Psoas muscle (tissue), 8 donors: ENCODE measurements at regions of chr17 and their contacts with region 1.

Region 1: GRCh38 chr17:5706577-5707216 is 122.4 kb upstream of the NLRP1 start:
- DNase-seq: peak; percentile 59 to 71
- ATAC-seq: peak; percentile 67 to 86 (median 83)
- H3K4me3 ChIP-seq: no peak overlapping the region
- H3K27ac ChIP-seq: no peak overlapping the region
- H3K4me1 ChIP-seq: no peaks in the 10 kb centered on the region
- H3K27me3 ChIP-seq: peaks cover 0 to 12% (median 2%) of the 10 kb centered on the region in 3 donors
- CTCF ChIP-seq: peak; percentile 71

Region 2: DNA sequence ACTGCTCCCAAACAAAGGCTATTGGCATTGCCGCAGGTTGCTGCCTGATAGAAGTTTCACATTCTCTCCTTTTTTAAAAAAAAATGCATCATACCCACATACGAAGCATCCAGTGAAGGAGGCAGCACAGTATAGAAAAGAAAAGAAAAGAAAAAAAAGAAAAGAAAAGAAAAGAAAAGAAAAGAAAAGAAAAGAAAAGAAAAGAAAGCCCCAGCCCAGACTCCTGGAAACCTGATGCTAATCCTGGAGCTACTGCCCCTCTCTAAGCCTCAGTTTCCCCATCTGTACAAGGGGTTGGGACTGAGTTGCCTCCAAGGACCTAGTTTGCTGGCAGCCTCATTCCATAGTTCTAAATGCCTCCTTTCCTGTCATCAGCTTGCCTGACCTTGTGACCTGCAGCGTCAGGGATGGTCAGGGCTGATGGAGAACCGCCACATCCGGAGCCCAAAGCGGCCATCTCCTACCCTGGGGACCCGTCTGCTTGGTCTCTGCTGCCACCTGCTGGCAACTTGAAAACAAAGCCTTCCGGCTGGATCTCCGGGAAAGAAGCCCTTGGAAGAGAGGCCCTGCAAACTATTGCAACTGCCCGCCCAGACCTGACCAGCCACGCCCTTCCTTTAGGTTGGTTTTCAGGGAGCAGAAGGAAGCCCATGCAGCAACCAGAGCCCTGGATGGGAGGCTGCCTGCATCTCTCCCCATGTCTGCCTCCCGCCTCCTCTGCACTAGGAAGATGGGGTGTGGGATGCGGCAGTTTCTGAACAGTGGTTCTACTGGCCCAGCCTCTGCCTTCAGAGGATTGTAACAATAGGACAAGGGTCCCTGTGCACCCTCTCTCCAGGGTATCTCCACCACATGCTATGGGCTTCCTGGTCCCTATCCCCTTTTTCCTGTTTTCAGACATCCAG is 715.3 kb after region 1 on chr17:
- intact Hi-C with region 1: loop called in 1 of 2 experiments (anchors 5 kb)
- DNase-seq: peak; percentile 76 to 87
- ATAC-seq: peak; percentile 85 to 91 (median 86)
- H3K4me3 ChIP-seq: no peak overlapping the region
- H3K27ac ChIP-seq: no peak overlapping the region
- H3K4me1 ChIP-seq: no peaks in the 10 kb centered on the region
- H3K27me3 ChIP-seq: peaks cover 0 to 14% (median 0%) of the 10 kb centered on the region in 3 donors
- CTCF ChIP-seq: peak; percentile 83